WTC11 (cell line): ENCODE measurements at regions of chr15 and their contacts with region 1.

Region 1: GRCh38 chr15:90143166-90143655 is 40.9 kb upstream of the IDH2 start:
- DNase-seq: peak; percentile 92
- ATAC-seq: peak; percentile 99
- H3K4me3 Mint-ChIP-seq: no peak overlapping the region
- H3K27ac Mint-ChIP-seq: no peak overlapping the region
- H3K4me1 Mint-ChIP-seq: peaks cover 10% of the 10 kb centered on the region
- H3K27me3 Mint-ChIP-seq: peaks cover 5% of the 10 kb centered on the region; the same call in 1 of the 2 replicates
- CTCF ChIP-seq: peak; percentile 62; the same call in 1 of the 2 replicates

Region 2: DNA sequence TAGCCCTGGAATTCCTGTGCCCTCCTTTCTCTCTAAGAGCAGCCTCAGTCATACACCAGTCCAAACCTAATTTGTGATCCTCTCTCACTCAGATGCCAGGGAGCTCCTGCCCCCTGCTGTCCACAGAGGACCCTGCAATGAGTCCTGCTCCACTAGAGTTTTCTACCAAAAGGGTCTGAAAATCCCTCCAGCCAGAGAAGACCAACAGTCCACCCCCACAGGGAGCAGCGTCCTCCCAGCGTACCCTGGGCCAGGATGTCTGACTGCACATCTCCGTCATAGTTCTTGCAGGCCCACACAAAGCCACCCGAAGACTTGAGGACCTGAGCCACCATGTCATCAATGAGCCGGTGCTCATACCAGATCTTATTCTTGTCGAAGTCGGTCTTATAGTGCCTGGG is 56.3 kb before region 1 on chr15:
- CTCF ChIA-PET with region 1: interaction called, 10 read pairs
- POLR2A ChIA-PET with region 1: no interaction called
- DNase-seq: peak; percentile 68
- ATAC-seq: peak; percentile 65
- H3K4me3 Mint-ChIP-seq: no peak overlapping the region
- H3K27ac Mint-ChIP-seq: peak overlapping the region; percentile 75; the same call in 1 of the 2 replicates
- H3K4me1 Mint-ChIP-seq: peaks cover 5% of the 10 kb centered on the region; the same call in 1 of the 2 replicates
- H3K27me3 Mint-ChIP-seq: no peaks in the 10 kb centered on the region
- CTCF ChIP-seq: peak; percentile 59

Region 3: GRCh38 chr15:90126457-90127435 is 16.5 kb before region 1 on chr15:
- CTCF ChIA-PET with region 1: interaction called, 12 read pairs
- POLR2A ChIA-PET with region 1: interaction called, 4 read pairs
- DNase-seq: peak; percentile 83
- ATAC-seq: peak; percentile 96
- H3K4me3 Mint-ChIP-seq: no peak overlapping the region
- H3K27ac Mint-ChIP-seq: peak overlapping the region; percentile 97
- H3K4me1 Mint-ChIP-seq: peaks cover 23% of the 10 kb centered on the region
- H3K27me3 Mint-ChIP-seq: no peaks in the 10 kb centered on the region; the same call in 1 of the 2 replicates
- CTCF ChIP-seq: no peak

Region 4: GRCh38 chr15:90214553-90215196 is 71.5 kb after region 1 on chr15:
- CTCF ChIA-PET with region 1: interaction called, 16 read pairs
- POLR2A ChIA-PET with region 1: no interaction called
- DNase-seq: no peak
- ATAC-seq: peak; percentile 43; the same call in 1 of the 2 replicates
- H3K4me3 Mint-ChIP-seq: no peak overlapping the region
- H3K27ac Mint-ChIP-seq: no peak overlapping the region
- H3K4me1 Mint-ChIP-seq: peaks cover 12% of the 10 kb centered on the region
- H3K27me3 Mint-ChIP-seq: no peaks in the 10 kb centered on the region
- CTCF ChIP-seq: no peak

Region 5: GRCh38 chr15:90291679-90292356 is 148.6 kb after region 1 on chr15:
- CTCF ChIA-PET with region 1: interaction called, 15 read pairs
- POLR2A ChIA-PET with region 1: no interaction called
- DNase-seq: peak; percentile 41
- ATAC-seq: no peak
- H3K4me3 Mint-ChIP-seq: no peak overlapping the region
- H3K27ac Mint-ChIP-seq: no peak overlapping the region
- H3K4me1 Mint-ChIP-seq: peaks cover 35% of the 10 kb centered on the region
- H3K27me3 Mint-ChIP-seq: no peaks in the 10 kb centered on the region
- CTCF ChIP-seq: no peak